ENCODE measurements at regions of chr10 and their contacts with region 1.

Region 1: GRCh38 chr10:99619851-99620712 is at the start of gene SLC25A28:
- DNase-seq: peak; percentile 89
- H3K4me3 ChIP-seq: peak within 1 kb of the TSS; percentile 69 to 96 (median 92)
- H3K27ac ChIP-seq: peak within 1 kb of the TSS; percentile 93 to 99 (median 98)
- H3K4me1 ChIP-seq: peaks cover 23 to 57% (median 38%) of the 10 kb centered on the region in 3 donors
- H3K27me3 ChIP-seq: no peaks in the 10 kb centered on the region
- CTCF ChIP-seq: no peak
- POLR2A ChIP-seq: peak in 1 of 4 donors; percentile 9
- total RNA-seq, gene SLC25A28: 13.8 to 38.0 (median 31.6) TPM

Region 2: GRCh38 chr10:99234041-99234790 is 385.9 kb before region 1 on chr10:
- intact Hi-C with region 1: no loop called
- DNase-seq: no peak
- H3K4me3 ChIP-seq: peak overlapping the region; percentile 21 to 70 (median 46)
- H3K27ac ChIP-seq: peak overlapping the region; percentile 19 to 80 (median 64)
- H3K4me1 ChIP-seq: peaks cover 18 to 48% (median 18%) of the 10 kb centered on the region in 3 donors
- H3K27me3 ChIP-seq: peaks cover 4 to 99% (median 19%) of the 10 kb centered on the region in 4 donors
- CTCF ChIP-seq: no peak
- POLR2A ChIP-seq: no peak

Region 3: DNA sequence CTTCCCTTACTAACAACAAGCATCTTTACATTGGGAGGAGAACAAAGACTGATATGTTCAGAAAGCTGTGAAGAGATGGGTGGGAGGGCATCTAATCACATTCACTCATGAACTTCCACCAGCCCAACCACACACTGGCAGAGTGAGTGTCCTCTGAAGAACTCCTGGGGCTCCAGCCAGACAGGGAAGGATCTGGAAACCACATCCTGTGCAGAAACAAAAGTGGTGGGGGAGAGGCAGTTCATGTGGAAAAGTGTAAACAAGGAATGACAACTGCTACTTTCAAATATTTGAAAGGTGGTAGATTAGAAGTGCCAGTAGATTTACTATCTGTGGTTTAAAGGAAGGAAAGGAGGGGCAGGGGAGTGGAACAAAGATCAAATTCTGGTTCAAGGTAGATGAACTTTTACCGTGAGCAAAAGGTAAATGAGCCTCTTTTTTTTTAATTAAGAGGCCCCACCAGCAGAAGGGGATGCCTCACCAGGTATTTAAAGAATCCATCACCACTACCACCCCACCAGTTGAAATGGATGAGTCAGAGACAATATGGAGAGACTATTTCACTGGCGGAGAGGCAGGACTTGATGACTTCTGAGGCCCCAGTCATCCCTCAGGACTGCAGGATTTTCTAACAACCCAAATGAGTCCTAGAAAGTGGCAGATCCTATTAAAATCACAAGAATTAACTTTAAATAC is 224.2 kb before region 1 on chr10:
- intact Hi-C with region 1: loop called (anchors 10 kb)
- DNase-seq: no peak
- H3K4me3 ChIP-seq: no peak overlapping the region
- H3K27ac ChIP-seq: no peak overlapping the region
- H3K4me1 ChIP-seq: peaks cover 0 to 24% (median 3%) of the 10 kb centered on the region in 3 donors
- H3K27me3 ChIP-seq: no peaks in the 10 kb centered on the region
- CTCF ChIP-seq: no peak
- POLR2A ChIP-seq: no peak

Region 4: DNA sequence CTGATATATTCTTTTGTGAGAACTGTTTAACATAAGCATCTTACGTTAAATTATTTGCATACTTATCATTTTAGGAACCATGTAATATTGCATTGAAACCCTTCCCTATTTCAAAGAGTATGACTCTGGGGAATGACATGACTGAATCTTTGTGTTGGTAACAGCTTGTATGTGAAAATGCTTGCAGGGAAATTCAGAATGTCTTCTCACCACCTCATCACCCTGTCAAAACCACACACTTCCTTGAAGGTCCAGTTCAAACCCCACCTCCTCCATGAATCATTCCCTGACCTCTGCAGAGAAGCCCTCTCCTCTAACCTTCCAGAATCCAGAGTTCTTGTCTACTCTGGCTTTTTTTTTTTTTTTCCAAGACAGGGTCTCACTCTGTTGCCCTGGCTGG is 113.7 kb before region 1 on chr10:
- intact Hi-C with region 1: no loop called
- DNase-seq: no peak
- H3K4me3 ChIP-seq: no peak overlapping the region
- H3K27ac ChIP-seq: no peak overlapping the region
- H3K4me1 ChIP-seq: no peaks in the 10 kb centered on the region
- H3K27me3 ChIP-seq: peaks cover 0 to 72% (median 0%) of the 10 kb centered on the region in 4 donors
- CTCF ChIP-seq: no peak
- POLR2A ChIP-seq: no peak

Region 5: DNA sequence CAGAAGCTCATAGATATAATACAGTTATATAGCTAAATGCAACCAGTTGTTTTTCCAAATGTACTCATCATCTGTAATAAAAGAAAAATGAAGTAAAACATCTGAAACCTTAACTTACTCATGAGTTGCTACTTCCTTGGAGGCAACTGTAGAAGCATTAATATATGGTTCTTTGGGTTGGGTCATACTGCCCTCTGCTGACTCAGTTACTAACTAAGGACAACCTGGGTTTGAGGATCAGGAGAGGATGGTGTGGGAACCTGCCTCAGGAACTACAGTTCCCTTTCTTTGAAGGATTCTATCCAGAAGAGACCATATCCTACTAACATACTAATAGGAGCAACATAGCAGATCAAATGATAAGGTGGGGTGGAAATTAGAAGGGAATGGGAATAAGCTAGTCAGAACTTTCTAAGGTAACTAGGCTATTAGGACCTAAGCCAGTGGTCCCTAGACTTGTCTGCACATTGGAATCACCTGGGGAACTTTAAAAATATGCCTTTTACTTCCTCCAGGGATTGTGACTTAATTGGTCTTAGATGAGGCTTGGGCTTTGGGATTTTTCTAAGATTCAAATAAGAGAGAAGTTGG is 91.1 kb after region 1 on chr10:
- intact Hi-C with region 1: loop called (anchors 10 kb)
- DNase-seq: no peak
- H3K4me3 ChIP-seq: no peak overlapping the region
- H3K27ac ChIP-seq: peak overlapping the region in 2 of 4 donors; percentile 10 to 91
- H3K4me1 ChIP-seq: peaks cover 2 to 34% (median 22%) of the 10 kb centered on the region in 3 donors
- H3K27me3 ChIP-seq: no peaks in the 10 kb centered on the region
- CTCF ChIP-seq: peak in 5 of 6 experiments; percentile 41 to 57 (median 56)
- POLR2A ChIP-seq: no peak

Region 6: DNA sequence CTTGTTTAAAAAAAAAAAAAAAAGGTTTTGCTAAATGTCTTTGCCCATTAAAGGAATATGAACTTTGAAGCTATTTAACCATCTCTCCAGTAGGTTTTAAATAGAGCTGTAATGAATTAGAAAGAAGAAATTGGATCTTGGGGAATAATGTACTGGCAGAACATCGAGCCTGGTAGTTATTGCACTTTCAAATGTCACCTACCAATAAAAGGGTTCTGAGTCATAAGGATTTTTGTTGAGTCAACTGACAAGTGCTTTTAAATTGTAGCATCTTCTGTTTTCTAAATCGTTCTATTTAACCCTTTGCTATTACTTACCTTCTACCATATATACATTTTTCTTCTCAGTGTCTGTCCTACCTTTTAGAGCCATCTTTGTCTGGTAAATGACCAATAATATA is 122.6 kb after region 1 on chr10:
- intact Hi-C with region 1: no loop called
- DNase-seq: no peak
- H3K4me3 ChIP-seq: no peak overlapping the region
- H3K27ac ChIP-seq: no peak overlapping the region
- H3K4me1 ChIP-seq: peaks cover 0 to 14% (median 0%) of the 10 kb centered on the region in 3 donors
- H3K27me3 ChIP-seq: no peaks in the 10 kb centered on the region
- CTCF ChIP-seq: no peak
- POLR2A ChIP-seq: no peak